ENCODE measurements at regions of chr17 and their contacts with region 1.

Region 1: DNA sequence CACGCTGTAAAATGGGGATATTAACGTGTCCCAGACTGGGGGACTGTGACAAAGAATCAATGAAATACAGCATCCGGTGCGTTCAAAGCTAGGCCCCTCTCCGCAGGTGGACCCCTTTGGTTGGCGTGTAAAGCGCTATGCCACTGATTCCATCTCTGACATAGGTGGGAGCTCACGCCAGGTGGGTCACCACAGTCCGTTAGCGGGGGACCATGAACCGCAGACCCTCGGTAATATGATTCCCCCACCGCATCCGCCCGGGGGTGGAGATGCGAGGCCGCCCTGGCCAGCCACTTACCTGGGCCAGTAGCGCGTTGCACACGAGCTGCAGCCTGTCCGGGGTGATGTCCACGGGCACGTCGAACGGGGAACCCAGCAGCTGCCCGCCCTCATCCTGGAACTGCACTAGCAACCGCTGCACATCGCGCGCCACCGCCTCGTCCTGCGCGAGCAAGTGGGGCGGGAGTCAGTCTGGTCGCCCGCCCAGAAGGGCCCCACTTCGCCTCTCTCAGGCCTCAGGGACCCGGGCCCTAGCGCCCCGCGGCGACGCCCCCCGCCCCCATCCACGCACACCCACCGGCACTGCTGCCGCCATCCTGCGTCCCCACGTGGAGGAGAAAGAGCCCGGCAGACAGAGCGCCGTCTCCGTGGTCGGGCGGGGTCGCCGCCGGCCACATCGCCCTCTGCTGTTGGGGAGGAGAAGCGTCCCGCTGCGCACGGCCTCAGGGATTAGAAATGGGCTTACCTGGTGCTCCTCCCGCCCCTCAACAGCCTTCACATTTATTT is at the start of gene NLE1:
- DNase-seq: peak; percentile 85 to 89 (median 87)
- H3K4me3 ChIP-seq: peak within 1 kb of the TSS; percentile 80 to 99
- H3K4me3 Mint-ChIP-seq: peak within 1 kb of the TSS; percentile 82 to 91 (median 88)
- H3K27ac ChIP-seq: peak within 1 kb of the TSS; percentile 77
- H3K27ac Mint-ChIP-seq: peak within 1 kb of the TSS; percentile 72 to 91 (median 78)
- H3K4me1 ChIP-seq: peaks cover 14% of the 10 kb centered on the region
- H3K4me1 Mint-ChIP-seq: peaks cover 8 to 32% (median 20%) of the 10 kb centered on the region in 4 donors
- H3K27me3 ChIP-seq: no peaks in the 10 kb centered on the region
- H3K27me3 Mint-ChIP-seq: no peaks in the 10 kb centered on the region
- total RNA-seq, gene NLE1: 20.1 to 20.5 TPM

Region 2: DNA sequence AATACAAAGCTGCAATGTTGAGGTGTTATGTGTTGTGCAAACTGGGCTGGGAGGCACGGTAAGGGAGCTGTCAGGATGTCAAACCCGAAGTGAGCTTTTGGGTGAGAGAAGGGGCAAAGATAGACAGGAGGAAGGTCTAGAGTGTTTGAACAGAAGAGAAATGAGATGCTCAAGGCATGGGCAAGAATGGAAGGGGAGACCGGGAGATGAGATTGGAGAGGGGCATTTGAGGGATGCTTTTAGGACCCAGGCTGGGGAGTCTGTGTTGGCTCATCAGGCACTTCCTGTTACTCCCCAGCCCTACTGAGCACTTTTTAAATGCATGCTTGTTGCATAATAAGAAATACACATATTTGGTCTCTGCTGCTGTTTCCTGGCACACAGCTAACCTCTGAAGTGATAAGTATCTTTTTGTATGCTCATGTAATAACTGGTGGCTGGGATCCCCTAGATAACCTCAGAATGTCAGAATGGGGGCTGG is 19.4 kb after region 1 on chr17:
- CTCF ChIA-PET with region 1: interaction called, 10 read pairs
- POLR2A ChIA-PET with region 1: interaction called, 16 read pairs
- intact Hi-C with region 1: loop called (anchors 1 kb)
- DNase-seq: peak; percentile 55 to 65 (median 62)
- H3K4me3 ChIP-seq: peak overlapping the region in 1 of 2 donors; percentile 12
- H3K4me3 Mint-ChIP-seq: peak overlapping the region; percentile 67 to 85 (median 74)
- H3K27ac ChIP-seq: peak overlapping the region; percentile 39
- H3K27ac Mint-ChIP-seq: peak overlapping the region; percentile 84 to 94 (median 93)
- H3K4me1 ChIP-seq: peaks cover 54% of the 10 kb centered on the region
- H3K4me1 Mint-ChIP-seq: peaks cover 38 to 77% (median 59%) of the 10 kb centered on the region in 4 donors
- H3K27me3 ChIP-seq: no peaks in the 10 kb centered on the region
- H3K27me3 Mint-ChIP-seq: no peaks in the 10 kb centered on the region

Region 3: GRCh38 chr17:35352284-35352683 is 210.4 kb after region 1 on chr17:
- CTCF ChIA-PET with region 1: no interaction called
- POLR2A ChIA-PET with region 1: no interaction called
- intact Hi-C with region 1: no loop called
- DNase-seq: no peak
- H3K4me3 ChIP-seq: no peak overlapping the region
- H3K4me3 Mint-ChIP-seq: no peak overlapping the region
- H3K27ac ChIP-seq: no peak overlapping the region
- H3K27ac Mint-ChIP-seq: peak overlapping the region in 3 of 7 donors; percentile 43 to 74 (median 54)
- H3K4me1 ChIP-seq: peaks cover 5% of the 10 kb centered on the region
- H3K4me1 Mint-ChIP-seq: peaks cover 12 to 24% (median 15%) of the 10 kb centered on the region in 4 donors
- H3K27me3 ChIP-seq: no peaks in the 10 kb centered on the region
- H3K27me3 Mint-ChIP-seq: no peaks in the 10 kb centered on the region

Region 4: DNA sequence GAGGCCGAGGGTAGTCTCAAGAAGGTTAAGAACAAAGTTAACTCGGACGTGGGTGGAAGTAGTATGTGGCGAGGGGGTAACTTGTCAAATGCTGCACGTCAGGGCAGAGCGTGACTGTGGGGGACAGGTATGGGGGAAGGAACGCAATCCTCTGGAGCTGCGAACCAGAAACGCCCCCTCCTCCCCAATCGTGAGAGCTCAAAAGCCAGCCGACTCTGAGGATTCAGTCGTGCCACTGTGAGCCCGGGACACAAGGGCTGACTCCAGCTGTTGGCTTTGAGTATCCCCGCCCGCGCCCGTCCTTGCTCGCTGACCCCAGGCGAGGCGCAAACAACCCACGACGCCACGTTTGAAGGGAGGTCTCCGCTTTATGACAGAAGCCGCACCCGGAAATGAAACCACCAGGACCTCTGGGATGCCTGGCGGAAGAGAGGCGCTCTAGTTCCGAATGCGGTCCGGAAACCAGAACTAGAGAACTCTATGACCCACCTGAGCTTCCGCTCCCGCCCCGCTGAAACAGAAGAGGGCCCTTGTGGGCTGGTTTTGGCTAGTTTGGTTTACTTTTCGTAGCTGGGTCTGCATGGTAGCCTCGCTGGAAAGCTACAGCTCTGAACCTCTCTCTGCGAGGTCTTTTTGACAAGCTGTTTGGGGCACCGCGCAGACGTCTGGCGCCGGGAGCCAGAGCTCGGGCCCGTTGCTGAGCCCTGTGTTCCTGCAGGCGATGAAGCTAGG is 436.5 kb after region 1 on chr17 and contains the start of gene PEX12:
- CTCF ChIA-PET with region 1: interaction called, 7 read pairs
- POLR2A ChIA-PET with region 1: interaction called, 11 read pairs
- intact Hi-C with region 1: loop called (anchors 1 kb)
- DNase-seq: peak; percentile 87 to 95 (median 91)
- H3K4me3 ChIP-seq: peak within 1 kb of the TSS; percentile 81 to 90
- H3K4me3 Mint-ChIP-seq: peak within 1 kb of the TSS; percentile 95 to 99 (median 97)
- H3K27ac ChIP-seq: peak within 1 kb of the TSS; percentile 89
- H3K27ac Mint-ChIP-seq: peak within 1 kb of the TSS; percentile 97 to 100 (median 99)
- H3K4me1 ChIP-seq: peaks cover 24% of the 10 kb centered on the region
- H3K4me1 Mint-ChIP-seq: peaks cover 6 to 34% (median 26%) of the 10 kb centered on the region in 4 donors
- H3K27me3 ChIP-seq: no peaks in the 10 kb centered on the region
- H3K27me3 Mint-ChIP-seq: no peaks in the 10 kb centered on the region
- total RNA-seq, gene PEX12: 8.2 to 8.5 TPM

Measured in CD4-positive, alpha-beta memory T cell (primary cell).